Activated T-helper 2 cell treated with anti-CD3 and anti-CD28 coated beads, Interferon-gamma antibody, Interleukin-2, Interleukin-4, amounts not matched to agents 10 μg/mL and 5 μg/mL and 100 μg/mL, durations not matched to agents 14 hours and 24 hours and 36 hours (primary cell): ENCODE measurements at regions of chr18 and their contacts with region 1.

Region 1: GRCh38 chr18:59085797-59086196 is 53.9 kb upstream of the SEC11C start:
- DNase-seq: no peak
- H3K4me3 Mint-ChIP-seq: no peak overlapping the region
- H3K27ac Mint-ChIP-seq: no peak overlapping the region
- H3K4me1 Mint-ChIP-seq: peaks cover 6% of the 10 kb centered on the region
- H3K27me3 Mint-ChIP-seq: peaks cover 16% of the 10 kb centered on the region

Region 2: DNA sequence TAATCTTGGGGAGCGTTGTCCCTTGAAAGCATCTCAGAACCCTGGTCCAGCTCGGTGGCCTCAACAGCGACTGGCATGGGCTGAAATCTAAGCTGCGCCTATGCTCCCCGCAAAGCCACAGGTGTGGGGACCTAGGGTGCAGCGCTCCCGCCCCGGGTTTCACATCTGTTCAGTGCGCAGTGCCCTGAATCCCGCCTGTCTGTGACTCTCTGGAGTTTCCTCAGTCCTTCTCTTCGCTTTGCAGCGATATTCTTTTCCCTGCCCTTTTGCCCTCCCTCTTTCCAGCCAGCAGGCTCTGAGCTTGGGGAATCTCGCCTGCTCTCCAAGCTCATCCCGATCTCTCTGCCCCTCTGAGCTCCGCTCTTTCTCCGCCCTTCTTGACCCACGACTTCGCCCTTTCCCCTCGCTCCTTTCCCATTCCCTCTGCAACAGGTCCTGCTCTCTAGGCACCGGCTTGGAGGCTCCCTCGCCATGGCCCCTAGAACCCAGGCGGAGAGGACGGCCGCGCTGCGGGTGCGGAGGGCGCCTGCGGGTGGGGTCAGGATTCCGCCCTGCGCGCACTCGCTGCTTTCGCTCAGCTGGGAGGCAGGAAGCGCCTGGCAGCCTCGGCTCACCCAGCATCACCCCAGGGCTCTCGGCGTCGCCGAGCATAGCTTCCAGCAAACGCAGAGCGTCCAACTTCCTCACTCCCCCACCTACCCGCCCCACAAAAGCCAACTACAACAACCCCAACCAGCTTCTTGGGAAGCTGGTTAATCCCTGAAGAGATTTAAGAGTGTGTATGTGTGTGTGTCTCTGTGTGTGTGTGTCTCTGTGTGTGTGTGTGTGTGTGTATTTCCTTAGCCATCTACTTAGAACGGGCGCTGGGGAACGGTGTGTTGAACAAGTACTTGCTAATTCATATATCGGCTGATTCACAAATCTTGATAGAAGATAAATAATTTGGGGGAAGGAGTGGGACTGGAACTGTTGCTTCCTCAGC is 135.3 kb after region 1 on chr18:
- intact Hi-C with region 1: loop called (anchors 10 kb)
- DNase-seq: no peak
- H3K4me3 Mint-ChIP-seq: no peak overlapping the region
- H3K27ac Mint-ChIP-seq: no peak overlapping the region
- H3K4me1 Mint-ChIP-seq: no peaks in the 10 kb centered on the region
- H3K27me3 Mint-ChIP-seq: peaks cover 75% of the 10 kb centered on the region

Region 3: DNA sequence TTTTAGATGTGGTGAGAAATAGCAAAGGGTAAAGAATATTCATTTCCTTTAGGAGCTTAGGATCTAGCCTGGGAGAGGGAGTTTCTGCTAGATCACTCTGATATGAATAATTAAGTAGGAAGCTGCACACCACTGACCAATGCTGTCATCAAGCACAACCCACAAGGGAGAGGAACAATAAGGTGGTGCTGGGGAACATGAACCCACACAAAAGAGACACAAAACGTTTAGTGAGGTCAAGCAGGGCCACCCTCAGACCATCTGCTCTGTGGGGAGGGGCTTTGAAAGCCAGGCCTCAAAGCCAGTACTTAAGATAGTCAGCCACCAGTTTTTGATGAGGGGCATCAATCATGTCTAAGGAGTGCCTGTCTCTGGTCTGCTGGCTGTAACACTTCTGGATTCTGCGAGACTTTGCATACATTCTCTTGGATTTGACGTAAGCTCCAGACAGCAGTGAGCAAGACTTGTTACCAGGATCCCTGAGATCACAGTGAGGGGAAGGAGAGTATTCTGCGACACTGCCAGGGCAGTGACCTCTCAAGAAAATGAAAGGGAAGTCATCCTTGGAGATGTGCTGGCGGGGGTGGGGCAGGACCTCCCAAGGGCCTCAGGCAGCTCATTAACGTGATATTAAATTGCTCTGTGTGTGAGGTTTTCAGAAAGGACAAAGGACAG is 484.4 kb after region 1 on chr18:
- intact Hi-C with region 1: no loop called
- DNase-seq: no peak
- H3K4me3 Mint-ChIP-seq: no peak overlapping the region
- H3K27ac Mint-ChIP-seq: no peak overlapping the region
- H3K4me1 Mint-ChIP-seq: no peaks in the 10 kb centered on the region
- H3K27me3 Mint-ChIP-seq: peaks cover 3% of the 10 kb centered on the region